Activated CD4-positive, alpha-beta T cell treated with anti-CD3 and anti-CD28 coated beads for 36 hours (primary cell): ENCODE measurements at regions of chr11 and their contacts with region 1.

Region 1: GRCh38 chr11:4393209-4393857 is at the start of gene TRIM21:
- DNase-seq: peak; percentile 93
- ATAC-seq: peak; percentile 99
- H3K4me3 Mint-ChIP-seq: peak within 1 kb of the TSS; percentile 93
- H3K27ac Mint-ChIP-seq: peak within 1 kb of the TSS; percentile 94
- H3K4me1 Mint-ChIP-seq: peaks cover 35% of the 10 kb centered on the region
- H3K27me3 Mint-ChIP-seq: peaks cover 5% of the 10 kb centered on the region
- total RNA-seq, gene TRIM21: 45.6 to 66.6 TPM

Region 2: GRCh38 chr11:4480574-4481566 is 87.5 kb after region 1 on chr11:
- CTCF ChIA-PET with region 1: no interaction called
- POLR2A ChIA-PET with region 1: no interaction called
- intact Hi-C with region 1: loop called in 1 of 2 experiments (anchors 1 kb)
- DNase-seq: peak; percentile 29
- ATAC-seq: peak; percentile 87
- H3K4me3 Mint-ChIP-seq: no peak overlapping the region
- H3K27ac Mint-ChIP-seq: peak overlapping the region; percentile 22
- H3K4me1 Mint-ChIP-seq: peaks cover 15% of the 10 kb centered on the region
- H3K27me3 Mint-ChIP-seq: peaks cover 7% of the 10 kb centered on the region

Region 3: GRCh38 chr11:4493480-4493818 is 100.1 kb after region 1 on chr11:
- CTCF ChIA-PET with region 1: no interaction called
- POLR2A ChIA-PET with region 1: no interaction called
- intact Hi-C with region 1: loop called (anchors 2 to 5 kb)
- DNase-seq: no peak
- ATAC-seq: no peak
- H3K4me3 Mint-ChIP-seq: no peak overlapping the region
- H3K27ac Mint-ChIP-seq: no peak overlapping the region
- H3K4me1 Mint-ChIP-seq: peaks cover 10% of the 10 kb centered on the region
- H3K27me3 Mint-ChIP-seq: peaks cover 14% of the 10 kb centered on the region

Region 4: DNA sequence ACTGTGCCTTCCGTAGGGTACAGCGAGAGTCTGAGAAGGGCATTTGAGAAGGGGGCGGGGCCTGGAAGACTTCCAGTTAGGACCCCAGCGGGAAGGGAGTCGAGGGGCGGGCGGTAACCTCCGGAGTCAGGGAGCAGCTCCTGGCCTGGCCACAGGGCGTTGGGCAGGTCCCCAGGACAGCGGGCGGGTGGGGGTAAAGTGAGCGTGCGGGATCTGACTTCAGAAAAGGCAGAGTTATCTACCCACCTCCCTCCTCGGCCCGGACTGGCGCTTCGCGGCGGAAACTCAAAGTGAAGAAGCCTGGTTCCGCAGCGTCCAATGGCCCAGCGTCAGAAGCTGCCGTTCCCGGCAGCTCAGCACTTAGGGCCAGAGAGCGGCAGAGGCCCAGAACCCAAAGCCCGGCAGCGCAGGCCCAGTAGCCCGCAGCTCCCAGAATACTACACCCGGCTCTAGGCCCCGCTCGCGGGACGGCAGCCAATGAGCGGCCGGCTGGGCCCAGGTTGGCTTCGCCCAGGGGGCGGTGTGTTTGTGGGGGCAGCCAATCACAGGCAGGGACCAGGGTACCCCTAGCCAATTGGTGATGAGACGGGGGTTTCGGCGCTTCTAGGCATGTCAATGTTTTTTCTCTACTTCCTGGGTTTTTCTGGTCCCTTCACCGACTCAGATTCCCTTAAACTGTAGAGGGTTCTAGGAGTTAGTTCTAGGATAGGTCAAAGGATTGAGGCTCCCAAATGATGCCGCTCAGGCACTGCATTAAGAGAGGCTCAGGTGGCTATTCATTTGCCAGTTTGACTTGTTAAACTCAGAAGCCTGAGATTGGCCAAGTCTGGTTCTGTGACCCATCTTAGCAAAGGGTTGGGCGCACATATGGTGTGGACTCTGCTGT is 214.7 kb after region 1 on chr11 and contains the start of gene TRIM68:
- CTCF ChIA-PET with region 1: no interaction called
- POLR2A ChIA-PET with region 1: no interaction called
- intact Hi-C with region 1: loop called in 1 of 2 experiments (anchors 1 kb)
- DNase-seq: peak; percentile 97
- ATAC-seq: peak; percentile 100
- H3K4me3 Mint-ChIP-seq: peak within 1 kb of the TSS; percentile 90
- H3K27ac Mint-ChIP-seq: peak within 1 kb of the TSS; percentile 90
- H3K4me1 Mint-ChIP-seq: peaks cover 35% of the 10 kb centered on the region
- H3K27me3 Mint-ChIP-seq: no peaks in the 10 kb centered on the region
- total RNA-seq, gene TRIM68: 8.9 to 9.2 TPM

Region 5: GRCh38 chr11:5267033-5267563 is 873.8 kb after region 1 on chr11:
- CTCF ChIA-PET with region 1: no interaction called
- POLR2A ChIA-PET with region 1: no interaction called
- intact Hi-C with region 1: no loop called
- DNase-seq: no peak
- ATAC-seq: no peak
- H3K4me3 Mint-ChIP-seq: no peak overlapping the region
- H3K27ac Mint-ChIP-seq: no peak overlapping the region
- H3K4me1 Mint-ChIP-seq: no peaks in the 10 kb centered on the region
- H3K27me3 Mint-ChIP-seq: peaks cover 5% of the 10 kb centered on the region